ENCODE measurements at regions of chr11 and their contacts with region 1.

Region 1: GRCh38 chr11:2400069-2400760 is at the start of gene TSSC4:
- DNase-seq: peak; percentile 99
- H3K4me3 Mint-ChIP-seq: peak within 1 kb of the TSS; percentile 87
- H3K27ac Mint-ChIP-seq: peak within 1 kb of the TSS; percentile 87
- H3K4me1 Mint-ChIP-seq: peaks cover 19% of the 10 kb centered on the region
- H3K27me3 Mint-ChIP-seq: no peaks in the 10 kb centered on the region
- total RNA-seq, gene TSSC4: 46.4 to 46.5 TPM

Region 2: DNA sequence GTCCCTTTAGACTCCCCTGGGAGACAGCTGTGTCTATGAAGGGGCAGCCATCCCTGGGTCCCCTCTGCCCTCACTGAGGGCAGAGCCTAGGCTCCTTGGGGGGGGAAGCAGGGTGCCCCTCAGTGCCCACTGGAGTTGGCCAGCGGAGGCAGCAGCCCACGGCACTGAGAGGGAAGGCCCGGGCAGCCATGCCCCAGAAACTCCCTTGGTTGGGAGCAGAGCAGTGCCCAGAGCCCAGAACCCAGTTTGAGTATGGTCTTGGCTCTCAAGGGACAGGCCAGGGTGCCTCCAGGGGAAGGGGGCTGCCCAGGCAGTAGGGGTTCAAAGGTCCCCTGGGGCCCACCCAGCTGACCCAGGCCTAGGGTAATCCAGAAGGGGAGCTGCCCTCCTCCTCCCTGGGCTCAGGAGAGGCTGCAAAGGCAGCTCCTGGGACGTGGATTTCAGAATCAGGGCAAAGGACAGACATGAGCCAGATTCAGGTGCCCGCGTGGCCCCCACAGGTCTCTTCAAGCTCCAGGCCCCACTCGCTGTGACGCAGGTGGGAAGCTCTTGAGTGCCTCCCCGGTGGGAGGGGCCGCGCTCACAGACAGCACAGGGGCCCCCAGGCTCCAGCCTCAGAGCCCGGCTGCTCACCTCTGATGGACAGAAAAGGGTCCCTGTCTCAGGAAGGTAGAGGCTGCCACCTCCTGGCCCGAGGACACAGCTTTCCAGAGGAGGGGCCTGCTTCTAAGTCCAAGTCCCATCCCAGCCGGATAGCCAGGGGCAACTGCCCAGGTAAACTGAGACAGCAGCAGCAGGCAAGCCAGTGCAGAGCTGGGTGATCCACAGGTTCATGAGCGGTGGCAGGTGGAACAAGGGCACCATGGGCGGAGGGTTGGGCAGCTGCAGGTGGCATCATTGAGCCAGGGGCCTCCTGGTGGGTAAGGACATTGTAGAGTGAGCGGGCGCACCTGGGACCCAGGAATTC is 101.1 kb before region 1 on chr11:
- CTCF ChIA-PET with region 1: interaction called, 42 read pairs
- POLR2A ChIA-PET with region 1: interaction called, 27 read pairs
- DNase-seq: peak; percentile 24
- H3K4me3 Mint-ChIP-seq: peak overlapping the region; percentile 65
- H3K27ac Mint-ChIP-seq: peak overlapping the region; percentile 58
- H3K4me1 Mint-ChIP-seq: peaks cover 37% of the 10 kb centered on the region
- H3K27me3 Mint-ChIP-seq: no peaks in the 10 kb centered on the region

Region 3: DNA sequence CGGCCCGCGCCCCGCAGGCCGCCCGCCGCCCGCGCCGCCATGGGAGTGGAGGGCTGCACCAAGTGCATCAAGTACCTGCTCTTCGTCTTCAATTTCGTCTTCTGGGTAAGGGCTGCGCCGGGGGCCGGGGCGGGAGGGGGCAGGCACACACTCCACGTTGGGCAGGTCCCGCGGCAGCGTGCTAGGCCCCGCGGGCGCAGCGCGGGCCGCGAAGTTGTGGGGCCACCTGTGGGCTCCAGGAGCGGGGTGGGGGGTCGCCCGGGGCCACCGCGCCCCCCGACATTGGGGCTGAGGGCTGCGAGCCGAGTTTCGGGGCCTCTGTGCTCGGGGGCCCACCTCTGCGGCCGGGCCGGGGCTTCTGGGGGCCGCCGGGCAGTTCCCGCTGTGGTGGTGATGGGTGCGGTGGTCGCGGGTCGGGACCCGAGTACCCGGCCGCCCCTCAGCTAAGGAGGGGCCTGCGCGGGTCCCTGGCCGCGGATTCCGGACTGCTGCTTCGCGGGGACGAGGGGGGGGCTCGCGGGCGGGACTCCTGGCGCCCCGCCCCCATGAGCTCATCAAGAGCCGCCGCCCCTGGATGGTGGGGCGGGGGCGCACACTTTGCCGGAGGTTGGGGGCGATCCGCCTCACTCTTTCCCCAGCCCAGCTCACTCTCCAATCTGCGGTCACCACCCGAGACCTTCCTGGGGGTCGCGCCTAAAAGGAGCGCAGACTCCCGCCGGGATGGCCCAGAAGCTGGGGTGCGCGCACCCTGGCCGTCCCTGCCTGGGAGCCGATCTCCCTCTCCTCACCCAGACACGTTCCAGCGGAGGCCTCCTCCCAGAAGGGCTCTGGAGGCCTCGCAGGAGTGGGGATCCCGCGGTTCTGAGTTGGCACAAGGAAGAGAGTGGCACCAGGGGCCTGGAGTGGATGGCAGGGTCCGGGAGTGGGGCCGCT is 22.4 kb before region 1 on chr11:
- CTCF ChIA-PET with region 1: interaction called, 9 read pairs
- POLR2A ChIA-PET with region 1: interaction called, 39 read pairs
- DNase-seq: peak; percentile 66
- H3K4me3 Mint-ChIP-seq: peak overlapping the region; percentile 85
- H3K27ac Mint-ChIP-seq: peak overlapping the region; percentile 75
- H3K4me1 Mint-ChIP-seq: peaks cover 37% of the 10 kb centered on the region
- H3K27me3 Mint-ChIP-seq: peaks cover under 1% of the 10 kb centered on the region

Region 4: GRCh38 chr11:2387266-2387987 is 12.8 kb before region 1 on chr11:
- CTCF ChIA-PET with region 1: interaction called, 23 read pairs
- POLR2A ChIA-PET with region 1: interaction called, 23 read pairs
- DNase-seq: peak; percentile 42
- H3K4me3 Mint-ChIP-seq: no peak overlapping the region
- H3K27ac Mint-ChIP-seq: peak overlapping the region; percentile 76
- H3K4me1 Mint-ChIP-seq: peaks cover 67% of the 10 kb centered on the region
- H3K27me3 Mint-ChIP-seq: no peaks in the 10 kb centered on the region

Region 5: DNA sequence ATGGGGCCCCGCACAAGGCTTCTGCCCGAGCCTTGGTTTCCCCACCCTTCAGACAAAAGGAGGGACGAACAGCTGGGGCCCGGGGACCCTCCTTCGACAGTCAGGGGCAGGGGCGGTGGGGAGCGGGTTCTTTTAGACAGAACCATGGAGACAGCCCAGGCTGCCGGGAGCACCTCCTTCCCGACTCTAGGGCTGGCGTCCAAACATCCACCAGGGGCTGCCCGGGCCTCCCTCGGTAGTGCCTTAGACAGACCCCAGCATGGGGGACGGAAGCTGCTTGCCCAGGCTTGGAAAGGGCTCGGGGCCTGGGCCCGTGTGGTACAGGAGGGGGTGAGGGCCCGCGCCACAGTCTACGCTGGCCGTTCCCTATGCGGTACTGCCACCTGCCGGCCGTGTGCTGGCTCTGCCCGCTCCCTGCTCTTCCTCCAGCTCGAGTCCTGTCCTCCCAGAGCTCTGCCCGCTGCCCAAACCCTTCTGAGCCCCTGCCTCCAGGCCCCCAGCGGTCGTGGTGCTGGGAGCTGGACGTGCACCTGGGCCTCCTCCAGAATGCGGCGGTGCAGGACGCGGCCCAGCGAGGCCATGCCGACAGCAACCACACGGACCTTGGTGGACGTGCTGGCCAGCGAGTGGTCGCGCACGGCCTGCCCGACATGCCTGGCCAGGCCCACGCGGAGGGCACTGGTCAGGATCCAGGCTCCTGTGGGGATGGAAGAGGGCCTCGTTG is 20.4 kb after region 1 on chr11:
- CTCF ChIA-PET with region 1: interaction called, 34 read pairs
- POLR2A ChIA-PET with region 1: interaction called, 3 read pairs
- DNase-seq: peak; percentile 70
- H3K4me3 Mint-ChIP-seq: no peak overlapping the region
- H3K27ac Mint-ChIP-seq: no peak overlapping the region
- H3K4me1 Mint-ChIP-seq: peaks cover 1% of the 10 kb centered on the region
- H3K27me3 Mint-ChIP-seq: no peaks in the 10 kb centered on the region

Region 6: DNA sequence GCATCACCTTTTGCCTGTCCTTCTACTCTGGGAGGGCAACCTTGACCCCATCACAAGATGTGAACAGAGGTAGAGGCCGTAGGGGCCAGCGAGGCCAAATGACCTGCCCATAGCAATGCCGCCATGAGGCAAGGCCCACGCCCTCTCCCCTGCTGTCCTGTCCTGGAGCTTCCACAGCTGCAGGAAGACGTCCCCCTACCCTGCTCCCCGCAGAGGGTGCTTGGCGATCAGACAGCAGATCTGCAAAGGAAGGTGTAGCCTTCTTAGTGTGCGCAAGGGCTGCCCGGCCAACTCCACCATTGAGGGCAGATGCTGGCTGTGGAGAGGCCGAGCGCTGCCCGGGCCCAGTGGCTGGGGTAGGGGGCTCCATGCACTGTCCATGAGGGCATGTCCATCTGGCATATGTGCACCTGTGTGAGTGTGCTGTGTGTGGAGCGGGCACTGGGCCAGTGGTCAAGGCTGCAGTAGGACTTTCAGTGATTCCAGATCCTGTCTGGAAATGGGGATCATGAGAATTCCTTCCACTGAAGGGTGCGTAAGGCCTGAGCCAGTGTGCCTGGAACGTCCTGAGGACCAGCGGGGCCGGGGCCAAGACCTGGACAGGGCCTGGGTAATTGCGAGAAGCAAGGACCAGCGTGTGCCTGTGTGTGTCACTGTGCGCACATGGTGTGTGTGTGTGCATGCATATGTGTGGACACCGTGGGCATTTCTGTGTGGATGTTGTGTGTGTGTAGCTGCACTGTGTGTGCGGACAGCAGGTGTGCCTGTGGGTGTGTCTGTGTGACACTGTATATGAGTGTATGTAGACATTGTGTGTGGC is 33.1 kb after region 1 on chr11:
- CTCF ChIA-PET with region 1: no interaction called
- POLR2A ChIA-PET with region 1: no interaction called
- DNase-seq: no peak
- H3K4me3 Mint-ChIP-seq: no peak overlapping the region
- H3K27ac Mint-ChIP-seq: no peak overlapping the region
- H3K4me1 Mint-ChIP-seq: no peaks in the 10 kb centered on the region
- H3K27me3 Mint-ChIP-seq: no peaks in the 10 kb centered on the region

Region 7: GRCh38 chr11:2444821-2445745 is 44.9 kb after region 1 on chr11 and contains the start of gene KCNQ1:
- CTCF ChIA-PET with region 1: no interaction called
- POLR2A ChIA-PET with region 1: no interaction called
- DNase-seq: peak; percentile 68
- H3K4me3 Mint-ChIP-seq: peak within 1 kb of the TSS; percentile 89
- H3K27ac Mint-ChIP-seq: peak within 1 kb of the TSS; percentile 71
- H3K4me1 Mint-ChIP-seq: peaks cover 34% of the 10 kb centered on the region
- H3K27me3 Mint-ChIP-seq: peaks cover 14% of the 10 kb centered on the region
- total RNA-seq, gene KCNQ1: 14.8 to 15.0 TPM

Measured in activated CD4-positive, alpha-beta memory T cell treated with anti-CD3 and anti-CD28 coated beads, Interleukin-2, amount 10 ng/mL, durations not matched to agents 7 days and 5 days (primary cell).